WTC11 (cell line): ENCODE measurements at regions of chr6 and their contacts with region 1.

Region 1: GRCh38 chr6:29589423-29590048 is 4.6 kb downstream of the OR2H2 start:
- DNase-seq: peak; percentile 53
- ATAC-seq: peak; percentile 50
- H3K4me3 Mint-ChIP-seq: no peak overlapping the region
- H3K27ac Mint-ChIP-seq: no peak overlapping the region
- H3K4me1 Mint-ChIP-seq: peaks cover 5% of the 10 kb centered on the region
- H3K27me3 Mint-ChIP-seq: no peaks in the 10 kb centered on the region
- CTCF ChIP-seq: peak; percentile 98

Region 2: DNA sequence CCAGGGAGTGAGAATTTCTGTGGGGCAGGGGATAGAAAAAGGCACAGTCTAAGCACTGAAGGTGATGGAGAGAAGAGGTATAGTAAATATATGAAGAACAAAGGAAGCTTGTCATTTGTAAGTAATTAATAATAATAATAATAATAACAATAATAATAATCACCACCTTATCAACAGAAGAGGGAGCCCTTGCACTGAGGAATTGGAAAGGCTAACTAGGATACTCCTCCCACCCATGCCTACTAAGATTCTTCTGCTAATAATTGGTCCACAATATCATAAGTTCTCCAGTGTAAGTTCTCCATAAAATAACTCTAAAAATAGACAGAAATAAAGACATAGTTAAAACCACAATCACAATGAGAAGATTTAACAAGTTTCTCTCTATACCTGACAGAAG is 213.5 kb before region 1 on chr6:
- CTCF ChIA-PET with region 1: interaction called, 31 read pairs
- POLR2A ChIA-PET with region 1: no interaction called
- DNase-seq: no peak
- ATAC-seq: no peak
- H3K4me3 Mint-ChIP-seq: no peak overlapping the region
- H3K27ac Mint-ChIP-seq: no peak overlapping the region
- H3K4me1 Mint-ChIP-seq: no peaks in the 10 kb centered on the region; the same call in 1 of the 2 replicates
- H3K27me3 Mint-ChIP-seq: no peaks in the 10 kb centered on the region
- CTCF ChIP-seq: no peak

Region 3: GRCh38 chr6:29414588-29414987 is 174.9 kb before region 1 on chr6 and contains the start of gene OR12D1:
- CTCF ChIA-PET with region 1: interaction called, 13 read pairs
- POLR2A ChIA-PET with region 1: no interaction called
- DNase-seq: no peak
- ATAC-seq: peak; percentile 65; the same call in 1 of the 2 replicates
- H3K4me3 Mint-ChIP-seq: no peak within 1 kb of the TSS
- H3K27ac Mint-ChIP-seq: no peak within 1 kb of the TSS
- H3K4me1 Mint-ChIP-seq: no peaks in the 10 kb centered on the region; the same call in none of the 2 replicates
- H3K27me3 Mint-ChIP-seq: no peaks in the 10 kb centered on the region; the same call in none of the 2 replicates
- CTCF ChIP-seq: no peak
- total RNA-seq, gene OR12D1: not detected in 3 replicates

Region 4: DNA sequence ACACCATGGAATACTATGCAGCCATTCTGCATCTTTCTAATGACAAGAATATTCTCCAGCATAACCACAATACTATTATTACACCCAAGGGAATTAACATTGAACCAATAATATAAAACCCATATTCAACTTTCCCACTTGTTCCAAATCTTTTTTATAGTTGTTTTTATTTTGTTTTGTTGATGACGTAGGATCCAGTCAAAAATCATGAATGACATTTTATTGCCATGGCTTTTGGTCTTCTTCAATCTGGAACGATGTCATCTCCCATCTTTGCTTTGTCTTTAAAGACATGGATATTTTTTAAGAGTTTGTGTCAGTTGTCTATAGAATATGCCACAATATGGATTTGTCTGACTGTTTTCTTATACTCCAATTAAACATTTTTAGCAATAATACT is 152.2 kb before region 1 on chr6:
- CTCF ChIA-PET with region 1: interaction called, 11 read pairs
- POLR2A ChIA-PET with region 1: no interaction called
- DNase-seq: no peak
- ATAC-seq: no peak
- H3K4me3 Mint-ChIP-seq: no peak overlapping the region
- H3K27ac Mint-ChIP-seq: no peak overlapping the region
- H3K4me1 Mint-ChIP-seq: no peaks in the 10 kb centered on the region
- H3K27me3 Mint-ChIP-seq: no peaks in the 10 kb centered on the region
- CTCF ChIP-seq: no peak

Region 5: GRCh38 chr6:29577544-29577943 is 12.0 kb before region 1 on chr6:
- CTCF ChIA-PET with region 1: interaction called, 10 read pairs
- POLR2A ChIA-PET with region 1: no interaction called
- DNase-seq: no peak
- ATAC-seq: no peak
- H3K4me3 Mint-ChIP-seq: no peak overlapping the region
- H3K27ac Mint-ChIP-seq: no peak overlapping the region
- H3K4me1 Mint-ChIP-seq: no peaks in the 10 kb centered on the region
- H3K27me3 Mint-ChIP-seq: peaks cover 3% of the 10 kb centered on the region
- CTCF ChIP-seq: no peak